Vagina (tissue), 2 donors: ENCODE measurements at regions of chr5 and their contacts with region 1.

Region 1: DNA sequence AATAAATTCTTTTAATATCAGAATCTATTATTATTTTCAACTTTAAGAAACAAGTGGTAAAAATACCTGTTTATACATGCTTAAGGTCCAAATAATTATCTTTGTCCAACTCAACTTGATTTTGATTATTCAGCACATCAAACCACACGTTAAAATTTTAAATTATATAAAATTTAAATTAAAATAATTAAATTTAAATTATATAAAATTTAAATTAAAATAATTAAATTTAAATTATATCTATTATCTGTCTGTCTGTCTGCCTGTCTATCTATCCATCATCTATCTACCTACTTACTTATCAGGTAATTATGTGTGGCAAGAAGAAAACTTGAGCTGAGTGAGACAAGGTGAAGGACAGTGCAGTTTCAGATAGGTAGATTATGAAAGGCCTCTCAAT is 605.3 kb upstream of the RIOK2 start:
- DNase-seq: no peak
- H3K4me3 ChIP-seq: no peak overlapping the region
- H3K27ac ChIP-seq: no peak overlapping the region
- H3K4me1 ChIP-seq: no peaks in the 10 kb centered on the region
- H3K27me3 ChIP-seq: no peaks in the 10 kb centered on the region
- CTCF ChIP-seq: no peak
- POLR2A ChIP-seq: no peak

Region 2: DNA sequence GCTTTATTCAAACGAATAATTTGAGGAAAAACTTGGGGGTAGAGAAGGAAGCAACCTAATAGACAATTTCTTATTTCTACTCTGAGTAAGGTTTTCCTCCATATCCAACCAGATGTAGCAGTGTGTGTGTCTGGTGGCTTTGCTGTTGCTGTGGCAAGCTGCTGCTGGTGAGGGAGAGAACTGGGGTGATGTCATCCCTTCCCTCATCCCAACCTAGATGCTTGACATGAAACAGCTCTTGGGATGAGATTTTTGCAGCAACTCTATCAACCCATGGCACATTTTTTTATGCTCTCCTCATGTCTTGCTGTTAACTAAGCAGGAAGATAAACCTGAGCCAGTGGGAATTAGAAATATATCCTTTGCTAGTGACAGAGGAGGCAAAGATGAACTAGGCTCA is 1491.1 kb before region 1 on chr5:
- intact Hi-C with region 1: loop called (anchors 5 kb)
- DNase-seq: no peak
- H3K4me3 ChIP-seq: no peak overlapping the region
- H3K27ac ChIP-seq: no peak overlapping the region
- H3K4me1 ChIP-seq: no peaks in the 10 kb centered on the region
- H3K27me3 ChIP-seq: no peaks in the 10 kb centered on the region
- CTCF ChIP-seq: no peak
- POLR2A ChIP-seq: no peak

Region 3: GRCh38 chr5:97676608-97677007 is 111.8 kb before region 1 on chr5:
- intact Hi-C with region 1: no loop called
- DNase-seq: no peak
- H3K4me3 ChIP-seq: no peak overlapping the region
- H3K27ac ChIP-seq: no peak overlapping the region
- H3K4me1 ChIP-seq: no peaks in the 10 kb centered on the region
- H3K27me3 ChIP-seq: no peaks in the 10 kb centered on the region
- CTCF ChIP-seq: no peak
- POLR2A ChIP-seq: no peak